GM12878 (cell line): ENCODE measurements at regions of chr9 and their contacts with region 1.

Region 1: GRCh38 chr9:125650271-125650737 is 56.7 kb downstream of the MAPKAP1 start:
- DNase-seq: peak; percentile 96
- ATAC-seq: peak; percentile 84
- H3K4me3 ChIP-seq: peak overlapping the region; percentile 53; the same call in 1 of the 2 replicates
- H3K27ac ChIP-seq: peak overlapping the region; percentile 95
- H3K4me1 ChIP-seq: peaks cover 59% of the 10 kb centered on the region
- H3K27me3 ChIP-seq: no peaks in the 10 kb centered on the region
- CTCF ChIP-seq: no peak
- EP300 ChIP-seq: peak; percentile 96 to 97
- POLR2A ChIP-seq: 0 out of 2 replicates have a peak, but pooled peaks have one; percentile 24
- RAD21 ChIP-seq: no peak

Region 2: DNA sequence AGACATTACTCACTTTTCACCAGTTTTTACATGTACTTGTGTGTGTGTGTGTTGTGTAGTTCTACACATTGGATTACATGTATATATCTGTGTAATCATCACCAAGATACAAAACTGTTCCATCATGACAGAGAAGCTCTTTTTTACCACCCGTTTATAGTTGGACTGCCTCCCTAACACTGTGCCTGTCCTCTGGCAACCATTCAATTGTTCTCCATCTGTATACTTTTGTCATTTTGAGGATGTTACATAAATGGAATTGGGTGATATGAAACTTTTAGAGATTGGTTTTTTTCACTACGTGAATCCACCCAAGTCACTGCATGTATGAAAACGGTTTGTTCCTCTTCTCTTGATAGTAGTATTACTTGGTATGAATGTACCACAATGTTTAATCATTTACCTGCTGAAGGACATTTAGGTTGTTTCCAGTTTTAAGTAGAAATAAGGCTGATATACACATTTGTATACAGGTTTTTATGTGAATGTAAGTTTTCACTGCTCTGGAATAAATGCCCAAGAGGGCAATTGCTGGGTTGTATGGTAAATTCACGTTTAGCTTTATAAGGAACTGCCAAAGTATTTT is 69.5 kb before region 1 on chr9:
- CTCF ChIA-PET with region 1: no interaction called
- POLR2A ChIA-PET with region 1: no interaction called
- RAD21 ChIA-PET with region 1: no interaction called
- SMC1A ChIA-PET with region 1: no interaction called
- in situ Hi-C with region 1: no loop called
- intact Hi-C with region 1: no loop called
- DNase-seq: peak; percentile 25
- ATAC-seq: peak; percentile 94
- H3K4me3 ChIP-seq: no peak overlapping the region
- H3K27ac ChIP-seq: no peak overlapping the region
- H3K4me1 ChIP-seq: no peaks in the 10 kb centered on the region
- H3K27me3 ChIP-seq: no peaks in the 10 kb centered on the region
- CTCF ChIP-seq: no peak
- EP300 ChIP-seq: no peak
- POLR2A ChIP-seq: no peak
- RAD21 ChIP-seq: no peak

Region 3: GRCh38 chr9:125663127-125663526 is 12.8 kb after region 1 on chr9:
- CTCF ChIA-PET with region 1: interaction called, 5 read pairs
- POLR2A ChIA-PET with region 1: interaction called, 20 read pairs
- RAD21 ChIA-PET with region 1: interaction called, 28 read pairs
- SMC1A ChIA-PET with region 1: interaction called, 18 read pairs
- in situ Hi-C with region 1: no loop called
- intact Hi-C with region 1: no loop called
- DNase-seq: no peak
- ATAC-seq: peak; percentile 36
- H3K4me3 ChIP-seq: no peak overlapping the region
- H3K27ac ChIP-seq: peak overlapping the region; percentile 22; the same call in 1 of the 2 replicates
- H3K4me1 ChIP-seq: peaks cover 21% of the 10 kb centered on the region
- H3K27me3 ChIP-seq: no peaks in the 10 kb centered on the region
- CTCF ChIP-seq: no peak
- EP300 ChIP-seq: no peak
- POLR2A ChIP-seq: no peak
- RAD21 ChIP-seq: no peak

Region 4: DNA sequence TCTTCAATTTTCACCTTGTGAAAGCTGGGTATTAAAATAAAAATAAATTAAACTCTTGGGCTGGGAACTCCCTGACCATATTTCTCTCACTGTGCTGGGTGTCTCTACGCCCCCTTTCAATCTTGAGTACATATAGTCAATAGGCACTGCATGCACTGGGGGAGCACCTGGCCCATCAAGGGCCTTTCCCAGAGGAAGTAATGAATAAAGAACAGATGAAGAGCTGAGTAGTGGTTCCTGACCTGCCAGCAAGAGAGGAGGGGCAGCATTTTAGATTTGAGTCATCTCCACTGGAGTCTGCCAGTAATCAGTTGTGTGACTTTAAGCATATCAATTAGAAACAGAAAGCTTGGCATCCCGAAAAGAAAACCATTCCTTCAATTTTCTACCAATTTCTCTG is 50.5 kb after region 1 on chr9:
- CTCF ChIA-PET with region 1: interaction called, 11 read pairs
- POLR2A ChIA-PET with region 1: interaction called, 105 read pairs
- RAD21 ChIA-PET with region 1: interaction called, 119 read pairs
- SMC1A ChIA-PET with region 1: interaction called, 185 read pairs
- in situ Hi-C with region 1: no loop called
- intact Hi-C with region 1: loop called (anchors 1 kb)
- DNase-seq: peak; percentile 84
- ATAC-seq: peak; percentile 89
- H3K4me3 ChIP-seq: peak overlapping the region; percentile 46; the same call in 1 of the 2 replicates
- H3K27ac ChIP-seq: peak overlapping the region; percentile 68
- H3K4me1 ChIP-seq: peaks cover 22% of the 10 kb centered on the region
- H3K27me3 ChIP-seq: no peaks in the 10 kb centered on the region
- CTCF ChIP-seq: no peak
- EP300 ChIP-seq: peak; percentile 81 to 82; a peak in 2 of 4 replicates
- POLR2A ChIP-seq: no peak
- RAD21 ChIP-seq: no peak; the same call in 1 of the 2 replicates

Region 5: GRCh38 chr9:125746017-125746773 is 95.9 kb after region 1 on chr9:
- CTCF ChIA-PET with region 1: interaction called, 3 read pairs
- POLR2A ChIA-PET with region 1: interaction called, 5 read pairs
- RAD21 ChIA-PET with region 1: interaction called, 9 read pairs
- SMC1A ChIA-PET with region 1: interaction called, 8 read pairs
- in situ Hi-C with region 1: loop called (anchors 5 kb)
- intact Hi-C with region 1: loop called (anchors 5 kb)
- DNase-seq: peak; percentile 82
- ATAC-seq: peak; percentile 86
- H3K4me3 ChIP-seq: peak overlapping the region; percentile 81; the same call in 1 of the 2 replicates
- H3K27ac ChIP-seq: peak overlapping the region; percentile 74
- H3K4me1 ChIP-seq: peaks cover 7% of the 10 kb centered on the region
- H3K27me3 ChIP-seq: no peaks in the 10 kb centered on the region
- CTCF ChIP-seq: no peak
- EP300 ChIP-seq: no peak
- POLR2A ChIP-seq: peak; percentile 85
- RAD21 ChIP-seq: no peak